ENCODE measurements at regions of chr11 and their contacts with region 1.

Region 1: GRCh38 chr11:6757373-6757967 is 14.3 kb downstream of the OR2AG2 start:
- DNase-seq: peak; percentile 30 to 82 (median 65)
- ATAC-seq: peak; percentile 80
- H3K4me3 ChIP-seq: no peak overlapping the region
- H3K4me3 Mint-ChIP-seq: no peak overlapping the region
- H3K27ac ChIP-seq: no peak overlapping the region
- H3K27ac Mint-ChIP-seq: no peak overlapping the region
- H3K4me1 ChIP-seq: no peaks in the 10 kb centered on the region
- H3K4me1 Mint-ChIP-seq: peaks cover 15% of the 10 kb centered on the region
- H3K27me3 ChIP-seq: no peaks in the 10 kb centered on the region
- H3K27me3 Mint-ChIP-seq: no peaks in the 10 kb centered on the region
- CTCF ChIP-seq: peak; percentile 74

Region 2: DNA sequence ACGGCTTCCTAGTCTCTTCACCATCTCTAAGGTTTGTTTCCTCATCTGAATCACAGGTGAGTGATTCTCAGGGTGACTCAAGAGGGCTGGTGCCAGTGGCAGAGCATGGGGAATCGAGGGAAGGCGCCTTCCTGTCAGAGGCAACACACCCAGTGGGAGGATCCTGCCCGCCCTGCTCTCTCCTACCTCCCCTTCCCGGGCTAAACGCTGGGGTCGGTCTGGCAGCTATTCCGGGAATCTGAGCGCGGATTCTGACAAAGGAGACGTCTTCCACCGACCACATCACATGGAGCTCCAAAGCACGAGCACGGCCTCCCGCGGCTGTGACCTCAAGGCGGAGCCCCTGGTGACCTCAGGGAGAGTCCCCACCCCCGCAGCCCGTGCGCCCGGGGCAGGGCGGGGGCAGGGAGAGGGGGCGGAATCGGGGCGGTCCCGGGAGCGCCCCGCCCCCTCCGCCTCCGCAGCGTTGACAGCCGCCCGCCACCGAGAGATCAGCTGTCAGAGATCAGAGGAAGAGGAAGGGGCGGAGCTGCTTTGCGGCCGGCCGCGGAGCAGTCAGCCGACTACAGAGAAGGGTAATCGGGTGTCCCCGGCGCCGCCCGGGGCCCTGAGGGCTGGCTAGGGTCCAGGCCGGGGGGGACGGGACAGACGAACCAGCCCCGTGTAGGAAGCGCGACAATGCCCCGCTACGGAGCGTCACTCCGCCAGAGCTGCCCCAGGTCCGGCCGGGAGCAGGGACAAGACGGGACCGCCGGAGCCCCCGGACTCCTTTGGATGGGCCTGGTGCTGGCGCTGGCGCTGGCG is 367.3 kb before region 1 on chr11 and contains the start of gene SMPD1:
- CTCF ChIA-PET with region 1: no interaction called
- POLR2A ChIA-PET with region 1: no interaction called
- intact Hi-C with region 1: loop called in 1 of 2 experiments (anchors 10 kb)
- DNase-seq: peak; percentile 90 to 97 (median 94)
- ATAC-seq: peak; percentile 88
- H3K4me3 ChIP-seq: peak within 1 kb of the TSS; percentile 84 to 90
- H3K4me3 Mint-ChIP-seq: peak within 1 kb of the TSS; percentile 93
- H3K27ac ChIP-seq: peak within 1 kb of the TSS; percentile 85 to 95
- H3K27ac Mint-ChIP-seq: peak within 1 kb of the TSS; percentile 98
- H3K4me1 ChIP-seq: peaks cover 52% of the 10 kb centered on the region
- H3K4me1 Mint-ChIP-seq: peaks cover 68% of the 10 kb centered on the region
- H3K27me3 ChIP-seq: no peaks in the 10 kb centered on the region
- H3K27me3 Mint-ChIP-seq: no peaks in the 10 kb centered on the region
- CTCF ChIP-seq: no peak
- total RNA-seq, gene SMPD1: 53.4 to 53.7 TPM

Region 3: GRCh38 chr11:6693342-6694228 is 63.9 kb before region 1 on chr11:
- CTCF ChIA-PET with region 1: interaction called, 18 read pairs
- POLR2A ChIA-PET with region 1: no interaction called
- intact Hi-C with region 1: no loop called
- DNase-seq: peak in 6 of 9 experiments; percentile 24 to 65 (median 33)
- ATAC-seq: peak; percentile 55
- H3K4me3 ChIP-seq: no peak overlapping the region
- H3K4me3 Mint-ChIP-seq: no peak overlapping the region
- H3K27ac ChIP-seq: peak overlapping the region in 1 of 2 experiments; percentile 56
- H3K27ac Mint-ChIP-seq: peak overlapping the region; percentile 13
- H3K4me1 ChIP-seq: peaks cover 13% of the 10 kb centered on the region
- H3K4me1 Mint-ChIP-seq: peaks cover 21% of the 10 kb centered on the region
- H3K27me3 ChIP-seq: no peaks in the 10 kb centered on the region
- H3K27me3 Mint-ChIP-seq: no peaks in the 10 kb centered on the region
- CTCF ChIP-seq: no peak

Region 4: DNA sequence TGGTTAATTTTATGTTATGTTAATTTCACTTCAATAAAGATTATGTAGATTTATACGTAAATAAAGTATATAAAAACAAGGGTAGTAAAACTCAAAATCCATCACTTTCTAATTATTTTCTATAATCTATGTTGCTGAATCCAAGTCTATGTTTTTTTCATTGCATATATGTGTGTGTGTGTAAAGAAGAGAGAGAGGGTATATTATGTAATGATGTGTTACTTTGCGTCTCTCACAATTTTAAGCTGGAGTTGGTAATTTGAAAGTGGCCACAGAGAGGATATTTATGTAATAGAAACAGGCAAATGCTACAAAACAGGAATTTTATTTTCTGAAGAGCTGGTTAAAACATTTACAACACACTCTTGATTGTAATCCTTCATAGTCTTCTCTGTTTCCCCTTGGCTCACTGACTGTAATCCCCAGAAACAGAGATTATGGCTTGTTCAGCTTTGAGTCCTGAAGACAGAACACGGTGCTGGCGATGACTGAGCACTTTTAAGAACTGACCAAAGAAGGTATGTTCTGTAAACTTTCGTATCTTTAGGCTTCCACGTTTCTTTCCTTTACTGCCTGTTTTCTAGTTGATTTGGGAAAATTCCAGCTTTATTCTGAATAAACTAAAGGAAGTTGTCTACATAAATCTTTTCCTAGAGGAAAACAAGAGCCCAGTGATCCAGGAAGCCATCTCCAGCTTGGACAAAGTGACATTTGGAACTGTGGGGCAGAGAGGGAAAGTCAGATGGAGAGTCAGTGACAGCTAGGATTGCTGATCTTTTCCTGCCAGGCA is 29.3 kb before region 1 on chr11:
- CTCF ChIA-PET with region 1: interaction called, 447 read pairs
- POLR2A ChIA-PET with region 1: interaction called, 3 read pairs
- intact Hi-C with region 1: no loop called
- DNase-seq: no peak
- ATAC-seq: no peak
- H3K4me3 ChIP-seq: no peak overlapping the region
- H3K4me3 Mint-ChIP-seq: peak overlapping the region; percentile 22
- H3K27ac ChIP-seq: peak overlapping the region in 1 of 2 experiments; percentile 26
- H3K27ac Mint-ChIP-seq: peak overlapping the region; percentile 91
- H3K4me1 ChIP-seq: peaks cover 49% of the 10 kb centered on the region
- H3K4me1 Mint-ChIP-seq: peaks cover 76% of the 10 kb centered on the region
- H3K27me3 ChIP-seq: no peaks in the 10 kb centered on the region
- H3K27me3 Mint-ChIP-seq: no peaks in the 10 kb centered on the region
- CTCF ChIP-seq: no peak

Region 5: GRCh38 chr11:6771926-6772893 is 14.7 kb after region 1 on chr11 and contains the start of gene OR2AG2:
- CTCF ChIA-PET with region 1: interaction called, 18 read pairs
- POLR2A ChIA-PET with region 1: no interaction called
- intact Hi-C with region 1: no loop called
- DNase-seq: no peak
- ATAC-seq: no peak
- H3K4me3 ChIP-seq: no peak within 1 kb of the TSS
- H3K4me3 Mint-ChIP-seq: no peak within 1 kb of the TSS
- H3K27ac ChIP-seq: no peak within 1 kb of the TSS
- H3K27ac Mint-ChIP-seq: no peak within 1 kb of the TSS
- H3K4me1 ChIP-seq: no peaks in the 10 kb centered on the region
- H3K4me1 Mint-ChIP-seq: no peaks in the 10 kb centered on the region
- H3K27me3 ChIP-seq: no peaks in the 10 kb centered on the region
- H3K27me3 Mint-ChIP-seq: no peaks in the 10 kb centered on the region
- CTCF ChIP-seq: no peak
- total RNA-seq, gene OR2AG2: not detected